Dendritic cell treated with granulocyte-macrophage colony-stimulating factor and Interleukin-4, amounts not matched to agents 40 ng/mL and 50 ng/mL, for 4 days (primary cell): ENCODE measurements at regions of chr20 and their contacts with region 1.

Region 1: GRCh38 chr20:45771182-45771759 is 20.4 kb downstream of the WFDC3 start:
- H3K4me3 Mint-ChIP-seq: no peak overlapping the region
- H3K27ac Mint-ChIP-seq: no peak overlapping the region
- H3K4me1 Mint-ChIP-seq: peaks cover 5% of the 10 kb centered on the region
- H3K27me3 Mint-ChIP-seq: peaks cover 12% of the 10 kb centered on the region

Region 2: GRCh38 chr20:45311589-45312211 is 459.6 kb before region 1 on chr20:
- intact Hi-C with region 1: no loop called
- H3K4me3 Mint-ChIP-seq: no peak overlapping the region
- H3K27ac Mint-ChIP-seq: no peak overlapping the region
- H3K4me1 Mint-ChIP-seq: peaks cover 11% of the 10 kb centered on the region
- H3K27me3 Mint-ChIP-seq: peaks cover 77% of the 10 kb centered on the region

Region 3: DNA sequence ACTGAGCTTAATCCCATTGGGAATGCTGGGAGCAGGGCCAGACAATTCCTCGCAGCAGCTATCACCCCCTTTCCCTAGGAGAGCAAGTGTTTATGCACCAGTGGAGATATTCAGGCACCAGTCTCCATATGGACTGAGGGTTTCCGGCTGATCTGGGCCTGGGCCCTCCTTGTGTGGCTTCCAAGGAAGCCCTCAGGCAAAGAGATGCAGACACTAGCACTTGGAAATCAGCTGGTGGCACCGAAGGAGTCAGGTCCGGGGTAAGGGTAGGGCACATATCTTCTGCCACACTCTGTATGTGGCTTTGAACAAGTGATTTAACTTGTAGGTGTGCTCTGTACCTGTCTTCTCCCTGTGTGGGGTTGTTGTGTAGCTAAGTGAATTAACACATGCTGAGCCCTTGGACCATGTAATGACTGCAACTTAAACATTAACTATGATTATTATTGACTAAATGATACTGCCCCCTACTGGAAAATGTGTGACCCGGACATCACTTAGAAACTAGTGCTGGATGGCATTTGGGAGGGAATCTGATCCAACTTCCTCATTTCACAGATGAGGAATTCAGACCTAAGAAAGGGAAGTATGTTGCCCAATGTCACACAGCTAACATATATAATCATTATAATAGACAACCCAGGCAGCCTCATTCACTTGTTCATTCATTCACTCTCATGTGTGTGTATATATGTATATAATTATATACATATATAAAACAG is 321.0 kb before region 1 on chr20:
- intact Hi-C with region 1: loop called (anchors 10 kb)
- H3K4me3 Mint-ChIP-seq: no peak overlapping the region
- H3K27ac Mint-ChIP-seq: no peak overlapping the region
- H3K4me1 Mint-ChIP-seq: peaks cover 27% of the 10 kb centered on the region
- H3K27me3 Mint-ChIP-seq: no peaks in the 10 kb centered on the region

Region 4: DNA sequence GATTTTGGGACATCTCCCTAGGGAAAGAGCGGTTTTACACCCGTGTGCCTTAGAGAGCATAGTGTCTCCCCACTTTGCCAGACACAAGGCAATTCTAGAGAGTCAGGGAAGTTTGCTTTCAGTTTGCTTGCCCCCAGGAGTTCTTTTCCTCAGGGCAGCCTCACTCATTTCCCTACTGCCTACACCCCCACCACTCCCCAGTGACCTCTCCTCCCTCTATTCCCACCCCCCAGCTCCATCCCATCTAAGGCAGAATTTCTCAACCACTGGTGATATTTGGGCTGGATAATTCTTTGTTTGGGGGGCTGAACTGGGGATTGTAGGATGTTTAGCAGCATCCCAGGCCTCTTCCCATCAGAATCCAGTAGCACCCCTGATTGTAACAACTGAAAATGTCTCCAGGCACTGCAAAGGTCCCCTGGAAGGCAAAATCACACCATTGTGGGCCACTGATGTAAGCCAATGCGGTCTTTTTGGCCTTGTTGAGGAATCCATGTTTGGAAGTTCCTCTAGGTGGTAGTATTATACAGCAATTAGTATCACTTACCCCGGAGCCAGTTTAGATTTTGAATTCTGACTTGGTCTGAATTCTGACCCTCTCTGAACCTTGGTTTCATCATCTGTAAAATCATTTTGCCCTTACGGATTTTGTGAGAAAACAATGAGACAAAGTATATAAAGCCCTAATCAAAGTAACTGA is 225.4 kb before region 1 on chr20:
- intact Hi-C with region 1: loop called (anchors 2 kb)
- H3K4me3 Mint-ChIP-seq: no peak overlapping the region
- H3K27ac Mint-ChIP-seq: no peak overlapping the region
- H3K4me1 Mint-ChIP-seq: no peaks in the 10 kb centered on the region
- H3K27me3 Mint-ChIP-seq: peaks cover 21% of the 10 kb centered on the region

Region 5: GRCh38 chr20:45592574-45593189 is 178.6 kb before region 1 on chr20:
- intact Hi-C with region 1: loop called (anchors 1 kb)
- H3K4me3 Mint-ChIP-seq: no peak overlapping the region
- H3K27ac Mint-ChIP-seq: no peak overlapping the region
- H3K4me1 Mint-ChIP-seq: peaks cover 7% of the 10 kb centered on the region
- H3K27me3 Mint-ChIP-seq: peaks cover 33% of the 10 kb centered on the region